CD4-positive, alpha-beta T cell (primary cell): ENCODE measurements at regions of chr9 and their contacts with region 1.

Region 1: GRCh38 chr9:126500684-126501382 is 112.9 kb upstream of the LMX1B start:
- DNase-seq: peak; percentile 45 to 85 (median 60)
- ATAC-seq: peak; percentile 74
- H3K4me3 ChIP-seq: no peak overlapping the region
- H3K4me3 Mint-ChIP-seq: peak overlapping the region; percentile 60
- H3K27ac ChIP-seq: no peak overlapping the region
- H3K27ac Mint-ChIP-seq: no peak overlapping the region
- H3K4me1 ChIP-seq: peaks cover 26% of the 10 kb centered on the region
- H3K4me1 Mint-ChIP-seq: peaks cover 12% of the 10 kb centered on the region
- H3K27me3 ChIP-seq: peaks cover 12 to 15% of the 10 kb centered on the region in 2 experiments
- H3K27me3 Mint-ChIP-seq: peaks cover 8% of the 10 kb centered on the region
- CTCF ChIP-seq: peak; percentile 95

Region 2: GRCh38 chr9:126558051-126558665 is 57.3 kb after region 1 on chr9:
- CTCF ChIA-PET with region 1: interaction called, 32 read pairs
- POLR2A ChIA-PET with region 1: interaction called, 4 read pairs
- intact Hi-C with region 1: loop called (anchors 1 kb)
- DNase-seq: peak; percentile 29 to 83 (median 60)
- ATAC-seq: peak; percentile 58
- H3K4me3 ChIP-seq: no peak overlapping the region
- H3K4me3 Mint-ChIP-seq: no peak overlapping the region
- H3K27ac ChIP-seq: no peak overlapping the region
- H3K27ac Mint-ChIP-seq: no peak overlapping the region
- H3K4me1 ChIP-seq: no peaks in the 10 kb centered on the region
- H3K4me1 Mint-ChIP-seq: no peaks in the 10 kb centered on the region
- H3K27me3 ChIP-seq: peaks cover 16 to 21% of the 10 kb centered on the region in 2 experiments
- H3K27me3 Mint-ChIP-seq: peaks cover 38% of the 10 kb centered on the region
- CTCF ChIP-seq: peak; percentile 84

Region 3: GRCh38 chr9:126781186-126782052 is 280.6 kb after region 1 on chr9:
- CTCF ChIA-PET with region 1: interaction called, 3 read pairs
- POLR2A ChIA-PET with region 1: no interaction called
- intact Hi-C with region 1: loop called in 1 of 2 experiments (anchors 5 kb)
- DNase-seq: peak; percentile 63 to 91 (median 82)
- ATAC-seq: peak; percentile 92
- H3K4me3 ChIP-seq: no peak overlapping the region
- H3K4me3 Mint-ChIP-seq: no peak overlapping the region
- H3K27ac ChIP-seq: no peak overlapping the region
- H3K27ac Mint-ChIP-seq: no peak overlapping the region
- H3K4me1 ChIP-seq: peaks cover 3% of the 10 kb centered on the region
- H3K4me1 Mint-ChIP-seq: no peaks in the 10 kb centered on the region
- H3K27me3 ChIP-seq: peaks cover 8 to 10% of the 10 kb centered on the region in 2 experiments
- H3K27me3 Mint-ChIP-seq: peaks cover 29% of the 10 kb centered on the region
- CTCF ChIP-seq: peak; percentile 98